T-cell (primary cell): ENCODE measurements at regions of chr20 and their contacts with region 1.

Region 1: GRCh38 chr20:34773726-34774125 is 51.7 kb downstream of the NCOA6 start:
- DNase-seq: no peak
- ATAC-seq: no peak
- H3K4me3 ChIP-seq: no peak overlapping the region
- H3K4me3 Mint-ChIP-seq: no peak overlapping the region
- H3K27ac ChIP-seq: no peak overlapping the region
- H3K27ac Mint-ChIP-seq: no peak overlapping the region
- H3K4me1 ChIP-seq: no peaks in the 10 kb centered on the region
- H3K4me1 Mint-ChIP-seq: no peaks in the 10 kb centered on the region
- H3K27me3 ChIP-seq: no peaks in the 10 kb centered on the region
- H3K27me3 Mint-ChIP-seq: no peaks in the 10 kb centered on the region

Region 2: GRCh38 chr20:33791959-33792597 is 981.6 kb before region 1 on chr20:
- CTCF ChIA-PET with region 1: interaction called in 1 of 2 experiments, 11 read pairs
- POLR2A ChIA-PET with region 1: no interaction called
- DNase-seq: peak in 30 of 35 experiments; percentile 8 to 67 (median 34)
- ATAC-seq: peak in 3 of 4 experiments; percentile 60 to 69 (median 62)
- H3K4me3 ChIP-seq: no peak overlapping the region
- H3K4me3 Mint-ChIP-seq: no peak overlapping the region
- H3K27ac ChIP-seq: no peak overlapping the region
- H3K27ac Mint-ChIP-seq: no peak overlapping the region
- H3K4me1 ChIP-seq: peaks cover 2 to 13% of the 10 kb centered on the region in 2 experiments
- H3K4me1 Mint-ChIP-seq: peaks cover 6 to 14% (median 8%) of the 10 kb centered on the region in 3 donors
- H3K27me3 ChIP-seq: no peaks in the 10 kb centered on the region
- H3K27me3 Mint-ChIP-seq: no peaks in the 10 kb centered on the region

Region 3: GRCh38 chr20:35135867-35136586 is 362.3 kb after region 1 on chr20:
- CTCF ChIA-PET with region 1: no interaction called
- POLR2A ChIA-PET with region 1: no interaction called
- DNase-seq: no peak
- ATAC-seq: no peak
- H3K4me3 ChIP-seq: no peak overlapping the region
- H3K4me3 Mint-ChIP-seq: no peak overlapping the region
- H3K27ac ChIP-seq: no peak overlapping the region
- H3K27ac Mint-ChIP-seq: no peak overlapping the region
- H3K4me1 ChIP-seq: no peaks in the 10 kb centered on the region
- H3K4me1 Mint-ChIP-seq: peaks cover 1 to 3% (median 2%) of the 10 kb centered on the region in 3 donors
- H3K27me3 ChIP-seq: no peaks in the 10 kb centered on the region
- H3K27me3 Mint-ChIP-seq: no peaks in the 10 kb centered on the region

Region 4: DNA sequence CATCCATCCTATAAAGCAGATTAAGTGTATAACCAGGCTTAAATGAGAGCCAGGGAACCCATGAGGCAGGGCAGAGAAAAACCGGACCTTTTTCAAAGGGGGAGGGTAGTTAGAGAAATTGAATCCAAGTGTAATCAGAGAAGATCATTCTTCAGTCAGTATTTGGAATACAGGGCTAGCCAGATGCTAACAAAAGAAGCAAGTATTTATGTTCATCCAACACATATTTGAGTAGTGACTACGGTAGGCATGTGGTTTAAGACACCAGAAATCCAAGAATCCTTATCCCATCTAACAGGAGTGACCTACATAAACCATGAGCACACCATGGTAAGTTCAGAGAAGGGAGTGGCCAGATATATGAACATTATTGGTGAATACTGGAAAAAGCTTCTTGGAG is 565.3 kb after region 1 on chr20:
- CTCF ChIA-PET with region 1: no interaction called
- POLR2A ChIA-PET with region 1: interaction called in 1 of 2 experiments, 11 read pairs
- DNase-seq: no peak
- ATAC-seq: no peak
- H3K4me3 ChIP-seq: no peak overlapping the region
- H3K4me3 Mint-ChIP-seq: no peak overlapping the region
- H3K27ac ChIP-seq: no peak overlapping the region
- H3K27ac Mint-ChIP-seq: no peak overlapping the region
- H3K4me1 ChIP-seq: no peaks in the 10 kb centered on the region
- H3K4me1 Mint-ChIP-seq: no peaks in the 10 kb centered on the region
- H3K27me3 ChIP-seq: no peaks in the 10 kb centered on the region
- H3K27me3 Mint-ChIP-seq: no peaks in the 10 kb centered on the region